ENCODE measurements at regions of chr2 and their contacts with region 1.

Region 1: GRCh38 chr2:29165362-29166236 is 50.4 kb downstream of the CLIP4 start:
- DNase-seq: peak; percentile 94
- ATAC-seq: peak; percentile 95
- H3K4me3 ChIP-seq: peak overlapping the region; percentile 25; the same call in 1 of the 2 replicates
- H3K27ac ChIP-seq: peak overlapping the region; percentile 82
- H3K4me1 ChIP-seq: peaks cover 24% of the 10 kb centered on the region
- H3K27me3 ChIP-seq: no peaks in the 10 kb centered on the region
- CTCF ChIP-seq: no peak

Region 2: GRCh38 chr2:29182931-29183330 is 17.3 kb after region 1 on chr2:
- CTCF ChIA-PET with region 1: no interaction called
- POLR2A ChIA-PET with region 1: no interaction called
- intact Hi-C with region 1: loop called (anchors 2 kb)
- DNase-seq: peak; percentile 68
- ATAC-seq: peak; percentile 90
- H3K4me3 ChIP-seq: no peak overlapping the region
- H3K27ac ChIP-seq: no peak overlapping the region
- H3K4me1 ChIP-seq: peaks cover 20% of the 10 kb centered on the region
- H3K27me3 ChIP-seq: no peaks in the 10 kb centered on the region
- CTCF ChIP-seq: no peak

Region 3: DNA sequence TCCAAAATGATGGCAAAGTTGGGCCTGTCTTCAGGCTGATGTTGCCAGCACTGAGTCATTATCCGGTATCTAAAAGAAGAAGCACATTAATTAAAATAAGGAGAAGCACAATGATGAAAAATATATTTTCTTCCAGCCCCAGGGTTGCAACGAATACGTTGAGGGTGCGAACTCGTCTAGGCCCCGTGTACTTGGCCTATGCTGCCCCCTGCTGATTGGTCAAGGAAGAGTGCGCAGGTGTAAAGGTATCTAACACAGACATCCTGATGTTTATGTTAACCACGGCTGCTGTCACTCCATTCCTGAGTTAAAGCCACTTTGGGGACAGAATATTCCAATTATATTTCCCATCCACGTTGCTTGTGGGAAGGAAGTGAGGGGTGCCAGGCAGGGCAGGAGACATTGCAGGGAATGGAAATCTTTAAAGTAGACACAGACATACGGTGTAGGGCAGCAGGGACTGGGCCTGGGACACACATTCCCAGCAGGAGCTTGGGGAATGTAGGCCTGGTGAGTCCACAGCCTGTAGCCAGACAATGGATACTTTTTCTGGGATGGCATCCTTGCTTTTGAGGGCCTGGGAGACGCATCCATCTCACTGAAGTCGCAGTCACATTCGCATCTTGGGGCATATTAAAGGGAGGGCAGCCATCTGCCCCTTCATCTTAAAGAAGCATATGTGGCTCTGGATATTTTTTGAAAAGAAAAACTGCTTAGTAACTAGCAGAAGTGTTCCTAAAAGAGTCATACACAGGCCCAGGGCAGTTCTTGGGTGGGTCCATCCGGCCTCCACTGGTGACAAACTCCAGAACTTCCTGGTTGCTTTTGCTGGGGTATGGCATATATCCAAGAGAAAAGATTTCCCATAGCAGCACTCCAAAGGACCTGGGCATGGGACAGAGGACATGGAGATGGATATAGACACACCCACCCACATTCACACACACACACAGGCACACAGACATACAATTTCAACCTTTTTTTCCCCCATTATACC is 31.5 kb after region 1 on chr2:
- CTCF ChIA-PET with region 1: no interaction called
- POLR2A ChIA-PET with region 1: no interaction called
- intact Hi-C with region 1: loop called (anchors 1 kb)
- DNase-seq: peak; percentile 86
- ATAC-seq: peak; percentile 96
- H3K4me3 ChIP-seq: no peak overlapping the region
- H3K27ac ChIP-seq: no peak overlapping the region
- H3K4me1 ChIP-seq: peaks cover 8% of the 10 kb centered on the region; the same call in 1 of the 2 replicates
- H3K27me3 ChIP-seq: no peaks in the 10 kb centered on the region
- CTCF ChIP-seq: peak; percentile 96

Region 4: GRCh38 chr2:29475499-29475898 is 309.9 kb after region 1 on chr2:
- CTCF ChIA-PET with region 1: no interaction called
- POLR2A ChIA-PET with region 1: no interaction called
- intact Hi-C with region 1: no loop called
- DNase-seq: no peak
- ATAC-seq: no peak
- H3K4me3 ChIP-seq: no peak overlapping the region
- H3K27ac ChIP-seq: no peak overlapping the region
- H3K4me1 ChIP-seq: no peaks in the 10 kb centered on the region
- H3K27me3 ChIP-seq: no peaks in the 10 kb centered on the region
- CTCF ChIP-seq: no peak